ENCODE measurements at regions of chr12 and their contacts with region 1.

Region 1: GRCh38 chr12:8590842-8591550 is 21.7 kb downstream of the AICDA start:
- DNase-seq: no peak
- ATAC-seq: peak; percentile 99
- H3K4me3 ChIP-seq: 0 out of 2 replicates have a peak overlapping the region, but pooled peaks have one; percentile 36
- H3K27ac ChIP-seq: no peak overlapping the region
- H3K4me1 ChIP-seq: peaks cover 3% of the 10 kb centered on the region; the same call in 1 of the 2 replicates
- H3K27me3 ChIP-seq: no peaks in the 10 kb centered on the region
- CTCF ChIP-seq: peak; percentile 18 to 25 (median 23); a peak in 2 of 6 replicates
- EP300 ChIP-seq: no peak
- POLR2A ChIP-seq: no peak
- RAD21 ChIP-seq: no peak

Region 2: DNA sequence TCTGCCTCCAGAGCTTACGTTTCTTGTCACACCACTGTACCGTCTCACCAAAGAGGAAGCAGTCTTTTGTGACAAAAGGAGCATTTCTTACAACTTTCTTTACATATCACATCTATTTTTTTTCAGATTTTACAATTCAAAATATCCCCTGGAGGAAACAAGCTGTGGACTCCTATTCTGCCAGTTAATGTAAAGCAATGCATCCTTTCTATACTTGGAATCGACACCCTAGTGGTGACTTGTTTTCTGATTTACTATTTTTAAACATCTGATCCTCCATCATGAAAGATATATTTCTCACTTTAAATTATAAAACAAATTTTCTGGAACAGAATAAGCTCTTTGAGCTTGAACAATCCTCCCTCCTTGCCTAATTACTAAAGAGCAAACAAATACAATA is 13.1 kb before region 1 on chr12:
- CTCF ChIA-PET with region 1: interaction called, 21 read pairs
- POLR2A ChIA-PET with region 1: no interaction called
- RAD21 ChIA-PET with region 1: no interaction called
- SMC1A ChIA-PET with region 1: interaction called, 3 read pairs
- in situ Hi-C with region 1: no loop called
- intact Hi-C with region 1: no loop called
- DNase-seq: no peak
- ATAC-seq: no peak
- H3K4me3 ChIP-seq: no peak overlapping the region
- H3K27ac ChIP-seq: no peak overlapping the region
- H3K4me1 ChIP-seq: no peaks in the 10 kb centered on the region
- H3K27me3 ChIP-seq: no peaks in the 10 kb centered on the region; a peak in 1 of 4 replicates
- CTCF ChIP-seq: no peak
- EP300 ChIP-seq: no peak
- POLR2A ChIP-seq: no peak
- RAD21 ChIP-seq: no peak

Region 3: GRCh38 chr12:8712572-8712971 is 121.6 kb after region 1 on chr12:
- CTCF ChIA-PET with region 1: no interaction called
- POLR2A ChIA-PET with region 1: no interaction called
- RAD21 ChIA-PET with region 1: no interaction called
- SMC1A ChIA-PET with region 1: no interaction called
- in situ Hi-C with region 1: no loop called
- intact Hi-C with region 1: no loop called
- DNase-seq: no peak
- ATAC-seq: no peak
- H3K4me3 ChIP-seq: no peak overlapping the region
- H3K27ac ChIP-seq: no peak overlapping the region
- H3K4me1 ChIP-seq: peaks cover 4% of the 10 kb centered on the region; the same call in 1 of the 2 replicates
- H3K27me3 ChIP-seq: peaks cover 0 to 1% of the 10 kb centered on the region in 2 experiments; a peak in 3 of 4 replicates
- CTCF ChIP-seq: no peak
- EP300 ChIP-seq: no peak
- POLR2A ChIP-seq: no peak
- RAD21 ChIP-seq: no peak